ENCODE measurements at regions of chr17 and their contacts with region 1.

Region 1: DNA sequence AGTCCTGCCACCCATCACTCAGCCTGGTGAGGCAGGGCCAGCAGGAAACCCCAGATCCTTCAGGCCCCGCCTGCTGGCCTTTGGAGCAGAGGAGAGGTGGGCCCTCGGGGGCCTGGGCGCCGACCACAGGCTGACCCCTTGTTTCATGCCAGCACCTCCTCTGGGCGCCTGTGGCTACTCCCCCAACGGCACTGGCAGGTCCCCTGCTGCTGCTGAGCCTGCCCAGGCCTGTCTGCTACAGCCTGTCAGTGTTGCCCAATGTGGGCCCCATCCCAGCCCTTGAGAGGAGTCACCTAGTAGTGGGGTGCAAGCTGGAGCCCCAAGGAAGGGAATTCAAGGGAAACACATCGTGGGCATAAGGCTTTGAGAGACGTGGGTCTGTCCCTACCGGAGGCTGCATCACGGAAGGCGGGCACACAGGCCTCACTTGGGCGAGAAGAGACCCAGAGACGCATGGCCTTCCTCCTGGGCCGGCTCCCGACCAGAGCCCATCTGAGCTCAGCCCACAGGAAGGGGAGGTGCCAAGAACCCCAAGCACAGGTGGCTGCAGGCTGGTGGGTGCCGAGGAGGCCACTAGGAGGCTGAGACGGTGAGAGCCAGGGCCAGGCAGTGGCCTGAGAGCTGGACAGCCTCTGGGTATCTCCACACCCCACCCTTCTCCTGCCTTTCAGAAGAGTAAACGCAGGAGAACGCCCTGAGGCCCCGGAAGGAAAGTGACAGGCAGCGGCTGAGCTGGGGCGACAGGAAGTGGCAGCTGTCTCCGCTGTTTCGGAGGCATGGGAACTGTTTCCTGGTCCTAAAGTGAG is 8.0 kb upstream of the FASN start:
- DNase-seq: peak; percentile 36 to 70 (median 54)
- H3K4me3 ChIP-seq: peak overlapping the region; percentile 88
- H3K4me3 Mint-ChIP-seq: peak overlapping the region; percentile 86 to 96 (median 90)
- H3K27ac ChIP-seq: peak overlapping the region; percentile 64
- H3K27ac Mint-ChIP-seq: peak overlapping the region; percentile 88 to 100 (median 96)
- H3K4me1 ChIP-seq: peaks cover 28% of the 10 kb centered on the region
- H3K4me1 Mint-ChIP-seq: peaks cover 19 to 38% (median 31%) of the 10 kb centered on the region in 3 donors
- H3K27me3 ChIP-seq: no peaks in the 10 kb centered on the region
- H3K27me3 Mint-ChIP-seq: no peaks in the 10 kb centered on the region

Region 2: DNA sequence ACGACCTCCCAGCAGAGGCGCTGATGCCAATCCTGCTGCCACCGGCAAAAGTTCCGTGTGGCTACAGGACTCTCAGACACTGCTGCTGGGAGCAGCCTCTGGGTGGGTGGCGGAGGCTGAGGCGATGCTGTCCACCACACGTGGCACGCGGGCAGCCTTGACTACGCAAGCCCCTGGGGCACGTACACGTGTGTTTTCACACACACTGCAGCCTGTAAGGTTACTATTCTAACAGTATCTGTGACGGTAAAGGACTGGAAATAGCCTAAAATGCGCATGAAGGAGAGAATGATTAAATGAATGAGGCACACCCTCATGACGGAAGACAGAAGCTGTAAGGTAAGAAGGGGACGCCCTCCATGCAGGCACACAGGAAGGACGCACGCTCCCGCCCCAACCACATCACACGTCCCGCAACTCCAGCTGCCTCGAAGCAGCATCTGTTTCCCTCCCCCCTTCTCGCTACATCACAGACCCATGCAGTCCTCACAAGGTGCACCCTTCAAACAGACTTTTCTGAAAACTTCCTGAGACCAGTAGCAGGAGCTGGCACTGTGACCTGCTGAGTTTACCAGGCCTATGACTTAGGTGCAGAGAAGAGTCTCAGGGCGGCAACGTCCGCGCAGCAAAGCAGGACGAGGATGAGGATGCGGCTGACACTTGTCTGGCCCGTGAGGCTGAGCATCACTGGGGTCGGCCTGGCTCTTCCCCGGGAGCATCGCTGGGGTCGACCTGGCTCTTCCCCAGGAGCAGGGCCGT is 20.6 kb after region 1 on chr17:
- CTCF ChIA-PET with region 1: interaction called, 16 read pairs
- POLR2A ChIA-PET with region 1: interaction called, 3 read pairs
- DNase-seq: peak; percentile 74 to 96 (median 93)
- H3K4me3 ChIP-seq: peak overlapping the region; percentile 16
- H3K4me3 Mint-ChIP-seq: peak overlapping the region; percentile 3 to 87 (median 80)
- H3K27ac ChIP-seq: peak overlapping the region; percentile 63
- H3K27ac Mint-ChIP-seq: peak overlapping the region; percentile 87 to 99 (median 98)
- H3K4me1 ChIP-seq: peaks cover 79% of the 10 kb centered on the region
- H3K4me1 Mint-ChIP-seq: peaks cover 35 to 59% (median 49%) of the 10 kb centered on the region in 3 donors
- H3K27me3 ChIP-seq: no peaks in the 10 kb centered on the region
- H3K27me3 Mint-ChIP-seq: peaks cover 0 to 1% of the 10 kb centered on the region in 2 donors

Region 3: DNA sequence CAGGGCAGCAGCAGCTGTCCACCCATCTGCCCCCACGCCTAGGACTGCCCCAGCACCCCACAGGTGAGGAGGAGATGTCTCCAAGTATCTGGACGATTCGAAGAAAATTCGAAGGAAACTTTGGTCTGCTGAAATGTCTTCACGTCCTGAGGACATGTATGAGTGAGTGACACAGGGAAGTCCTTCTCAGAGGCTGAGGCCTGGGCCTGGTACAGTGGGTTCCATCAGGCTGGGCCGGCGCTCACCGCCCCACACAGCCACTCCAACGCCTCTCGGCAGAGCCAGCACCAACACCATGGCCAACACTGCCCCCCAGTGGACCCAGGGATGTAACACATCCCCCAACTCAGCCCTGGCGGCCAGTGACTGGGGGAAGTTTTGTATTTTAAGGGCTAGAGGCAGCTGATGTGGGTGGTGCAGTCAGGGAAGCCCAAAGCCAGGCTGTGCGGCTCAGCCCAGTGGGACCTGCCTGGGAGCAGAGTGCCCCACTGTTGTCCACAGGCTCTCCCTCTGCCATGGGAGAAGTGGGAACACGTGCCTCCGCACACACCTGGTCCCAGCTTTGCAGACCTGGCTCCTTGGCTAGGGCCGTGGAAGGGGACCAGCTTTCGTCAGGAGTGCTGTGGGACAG is 47.8 kb after region 1 on chr17:
- CTCF ChIA-PET with region 1: interaction called, 14 read pairs
- POLR2A ChIA-PET with region 1: no interaction called
- DNase-seq: peak; percentile 70 to 86 (median 76)
- H3K4me3 ChIP-seq: no peak overlapping the region
- H3K4me3 Mint-ChIP-seq: no peak overlapping the region
- H3K27ac ChIP-seq: no peak overlapping the region
- H3K27ac Mint-ChIP-seq: peak overlapping the region in 4 of 8 donors; percentile 54 to 83 (median 72)
- H3K4me1 ChIP-seq: peaks cover 7% of the 10 kb centered on the region
- H3K4me1 Mint-ChIP-seq: peaks cover 0 to 5% (median 3%) of the 10 kb centered on the region in 3 donors
- H3K27me3 ChIP-seq: no peaks in the 10 kb centered on the region
- H3K27me3 Mint-ChIP-seq: no peaks in the 10 kb centered on the region

Region 4: DNA sequence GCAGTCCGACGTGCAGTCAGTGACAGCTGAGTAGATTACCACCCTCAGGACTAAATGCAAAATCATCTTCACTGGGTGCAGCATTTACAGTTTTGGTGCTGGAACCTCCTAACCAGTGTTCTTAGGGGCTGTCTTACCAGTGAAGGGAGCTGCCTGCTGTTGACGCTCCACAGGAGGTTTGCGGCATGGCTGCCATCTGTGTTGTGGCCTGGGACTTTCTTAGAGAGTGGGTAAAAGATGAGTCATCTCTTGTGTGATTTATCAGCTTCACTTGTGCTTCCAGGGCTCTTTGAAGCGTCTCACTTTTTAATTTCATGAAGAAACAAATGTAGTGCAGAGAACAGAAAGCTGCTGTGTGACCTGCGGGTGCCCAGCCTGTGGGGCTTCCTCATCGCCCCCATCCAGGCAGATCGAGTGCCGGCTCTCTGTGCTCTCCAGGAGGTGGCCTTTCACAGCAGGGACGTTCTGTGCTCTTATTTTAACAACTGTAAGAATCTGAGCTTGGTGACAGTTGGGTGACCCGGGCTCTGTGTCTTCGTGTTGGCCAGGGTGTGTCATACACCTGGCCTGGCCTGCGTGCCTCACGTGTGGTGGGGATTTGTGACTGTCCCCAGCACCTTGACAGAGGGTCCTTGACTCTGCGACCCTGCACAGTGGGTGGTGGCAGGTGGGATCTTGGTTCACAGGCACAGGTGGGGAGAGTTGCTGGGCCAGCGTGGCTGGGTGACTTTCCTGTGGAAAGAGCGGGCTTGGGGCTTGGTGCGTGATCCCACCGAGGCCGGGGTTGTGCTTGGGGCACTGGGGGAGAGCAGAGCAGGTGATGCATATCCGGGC is 758.1 kb after region 1 on chr17:
- CTCF ChIA-PET with region 1: no interaction called
- POLR2A ChIA-PET with region 1: no interaction called
- DNase-seq: peak; percentile 78 to 96 (median 93)
- H3K4me3 ChIP-seq: peak overlapping the region; percentile 55
- H3K4me3 Mint-ChIP-seq: peak overlapping the region; percentile 62 to 90 (median 83)
- H3K27ac ChIP-seq: peak overlapping the region; percentile 73
- H3K27ac Mint-ChIP-seq: peak overlapping the region; percentile 93 to 99 (median 98)
- H3K4me1 ChIP-seq: peaks cover 83% of the 10 kb centered on the region
- H3K4me1 Mint-ChIP-seq: peaks cover 65 to 85% (median 74%) of the 10 kb centered on the region in 3 donors
- H3K27me3 ChIP-seq: no peaks in the 10 kb centered on the region
- H3K27me3 Mint-ChIP-seq: no peaks in the 10 kb centered on the region